Activated T-helper 1 cell treated with anti-CD3 and anti-CD28 coated beads, Interleukin-12 subunit alpha, Interleukin-12 subunit beta, Interleukin-2, Interleukin-4 antibody, amounts not matched to agents 30 ng/mL and 10 ng/mL and 1 ng/mL, durations not matched to agents 14 hours and 24 hours and 36 hours (primary cell): ENCODE measurements at regions of chr11 and their contacts with region 1.

Region 1: GRCh38 chr11:88357323-88358039 is 19.9 kb upstream of the CTSC start:
- DNase-seq: no peak
- H3K4me3 Mint-ChIP-seq: peak overlapping the region; percentile 45
- H3K27ac Mint-ChIP-seq: peak overlapping the region; percentile 59
- H3K4me1 Mint-ChIP-seq: peaks cover 52% of the 10 kb centered on the region
- H3K27me3 Mint-ChIP-seq: no peaks in the 10 kb centered on the region

Region 2: DNA sequence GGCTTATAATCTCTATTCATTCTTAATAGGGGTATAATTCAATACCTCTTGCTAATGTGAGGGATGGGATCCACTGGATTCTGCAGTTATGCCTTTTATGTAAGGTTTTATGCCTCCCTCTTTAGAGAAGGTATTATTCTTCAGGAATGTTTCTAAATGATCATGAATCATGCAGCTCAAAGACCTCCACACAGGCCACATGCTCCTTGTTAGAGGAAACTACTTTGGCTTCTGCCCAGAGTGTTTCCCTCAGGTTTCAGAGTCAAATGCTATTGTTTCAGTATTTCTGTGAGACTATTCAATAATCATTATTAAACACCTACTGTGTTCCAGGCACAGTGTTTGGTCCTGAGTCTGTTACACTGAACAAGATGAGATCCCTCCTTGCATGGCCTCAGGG is 298.2 kb before region 1 on chr11:
- intact Hi-C with region 1: no loop called
- DNase-seq: no peak
- H3K4me3 Mint-ChIP-seq: no peak overlapping the region
- H3K27ac Mint-ChIP-seq: no peak overlapping the region
- H3K4me1 Mint-ChIP-seq: no peaks in the 10 kb centered on the region
- H3K27me3 Mint-ChIP-seq: peaks cover 2% of the 10 kb centered on the region

Region 3: DNA sequence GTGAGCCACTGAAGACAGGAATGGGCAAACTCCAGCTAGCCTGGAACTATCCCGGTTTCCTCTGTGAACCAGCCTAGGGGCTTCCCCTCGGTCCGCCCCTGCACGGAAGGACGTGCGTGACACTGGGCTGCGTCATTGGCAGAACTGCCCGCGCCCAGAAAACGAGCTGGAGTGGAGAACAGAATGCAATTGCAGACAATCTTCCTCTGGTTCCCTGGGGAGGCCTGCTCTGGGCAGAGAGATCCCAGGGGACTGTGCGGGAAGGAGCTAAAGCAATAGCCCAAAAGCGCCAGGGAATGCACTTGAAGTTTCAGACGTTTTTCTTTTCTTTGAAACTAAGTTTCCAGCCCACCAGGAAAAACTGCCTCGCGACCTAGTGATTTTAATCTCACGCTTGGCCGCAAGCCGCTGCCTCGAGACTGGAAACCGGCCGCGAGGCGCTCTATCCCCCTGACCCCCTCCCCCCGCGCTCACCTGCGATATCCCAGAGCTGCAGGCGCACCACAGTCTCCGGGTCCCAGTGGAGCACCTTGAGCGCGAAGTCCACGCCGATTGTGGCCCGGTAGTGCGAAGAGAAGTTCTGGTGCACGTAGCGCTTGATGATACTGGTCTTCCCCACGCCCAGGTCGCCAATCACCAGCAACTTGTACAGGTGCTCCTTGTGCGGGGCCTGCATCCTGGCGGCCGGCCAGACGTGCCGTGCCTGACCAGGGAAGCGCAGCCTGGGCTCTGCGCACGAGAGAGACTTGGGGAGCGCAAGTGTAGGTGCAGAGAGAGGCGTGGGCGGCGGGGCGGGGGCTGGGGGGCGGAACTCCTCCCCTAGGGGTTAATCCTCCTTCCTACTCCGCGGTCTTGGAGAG is 182.5 kb before region 1 on chr11 and contains the start of gene RAB38:
- intact Hi-C with region 1: loop called (anchors 1 kb)
- DNase-seq: peak; percentile 32
- H3K4me3 Mint-ChIP-seq: peak within 1 kb of the TSS; percentile 83
- H3K27ac Mint-ChIP-seq: peak within 1 kb of the TSS; percentile 73
- H3K4me1 Mint-ChIP-seq: peaks cover 52% of the 10 kb centered on the region
- H3K27me3 Mint-ChIP-seq: no peaks in the 10 kb centered on the region
- total RNA-seq, gene RAB38: 2.0 and 2.8 TPM in 2 replicates

Region 4: GRCh38 chr11:88345408-88345807 is 12.1 kb before region 1 on chr11:
- intact Hi-C with region 1: loop called (anchors 1 kb)
- DNase-seq: no peak
- H3K4me3 Mint-ChIP-seq: no peak overlapping the region
- H3K27ac Mint-ChIP-seq: no peak overlapping the region
- H3K4me1 Mint-ChIP-seq: peaks cover 25% of the 10 kb centered on the region
- H3K27me3 Mint-ChIP-seq: peaks cover 3% of the 10 kb centered on the region

Region 5: GRCh38 chr11:88421530-88421929 is 64.0 kb after region 1 on chr11:
- intact Hi-C with region 1: loop called (anchors 2 kb)
- DNase-seq: peak; percentile 43
- H3K4me3 Mint-ChIP-seq: peak overlapping the region; percentile 67
- H3K27ac Mint-ChIP-seq: peak overlapping the region; percentile 90
- H3K4me1 Mint-ChIP-seq: peaks cover 69% of the 10 kb centered on the region
- H3K27me3 Mint-ChIP-seq: no peaks in the 10 kb centered on the region

Region 6: GRCh38 chr11:88849368-88849767 is 491.9 kb after region 1 on chr11:
- intact Hi-C with region 1: loop called (anchors 10 kb)
- DNase-seq: no peak
- H3K4me3 Mint-ChIP-seq: no peak overlapping the region
- H3K27ac Mint-ChIP-seq: no peak overlapping the region
- H3K4me1 Mint-ChIP-seq: peaks cover 11% of the 10 kb centered on the region
- H3K27me3 Mint-ChIP-seq: peaks cover 5% of the 10 kb centered on the region

Region 7: GRCh38 chr11:90355200-90355599 is 1997.7 kb after region 1 on chr11:
- intact Hi-C with region 1: no loop called
- DNase-seq: no peak
- H3K4me3 Mint-ChIP-seq: no peak overlapping the region
- H3K27ac Mint-ChIP-seq: no peak overlapping the region
- H3K4me1 Mint-ChIP-seq: no peaks in the 10 kb centered on the region
- H3K27me3 Mint-ChIP-seq: no peaks in the 10 kb centered on the region